ENCODE measurements at regions of chr6 and their contacts with region 1.

Region 1: GRCh38 chr6:76466286-76466685 is 393.8 kb upstream of the IMPG1 start:
- DNase-seq: no peak
- H3K4me3 ChIP-seq: no peak overlapping the region
- H3K27ac ChIP-seq: no peak overlapping the region
- H3K4me1 ChIP-seq: no peaks in the 10 kb centered on the region
- H3K27me3 ChIP-seq: no peaks in the 10 kb centered on the region
- CTCF ChIP-seq: no peak
- EP300 ChIP-seq: no peak
- POLR2A ChIP-seq: no peak

Region 2: GRCh38 chr6:75368151-75368779 is 1098.0 kb before region 1 on chr6:
- in situ Hi-C with region 1: no loop called
- intact Hi-C with region 1: no loop called
- DNase-seq: peak; percentile 15
- H3K4me3 ChIP-seq: no peak overlapping the region
- H3K27ac ChIP-seq: peak overlapping the region in 3 of 4 donors; percentile 48 to 54 (median 49)
- H3K4me1 ChIP-seq: peaks cover 0 to 14% (median 0%) of the 10 kb centered on the region in 4 donors
- H3K27me3 ChIP-seq: no peaks in the 10 kb centered on the region
- CTCF ChIP-seq: peak; percentile 26 to 47 (median 33)
- EP300 ChIP-seq: no peak
- POLR2A ChIP-seq: no peak

Region 3: GRCh38 chr6:76441875-76442274 is 24.4 kb before region 1 on chr6:
- in situ Hi-C with region 1: no loop called
- intact Hi-C with region 1: no loop called
- DNase-seq: no peak
- H3K4me3 ChIP-seq: no peak overlapping the region
- H3K27ac ChIP-seq: no peak overlapping the region
- H3K4me1 ChIP-seq: no peaks in the 10 kb centered on the region
- H3K27me3 ChIP-seq: no peaks in the 10 kb centered on the region
- CTCF ChIP-seq: no peak
- EP300 ChIP-seq: no peak
- POLR2A ChIP-seq: no peak

Region 4: GRCh38 chr6:76490456-76490855 is 24.2 kb after region 1 on chr6:
- in situ Hi-C with region 1: no loop called
- intact Hi-C with region 1: no loop called
- DNase-seq: no peak
- H3K4me3 ChIP-seq: no peak overlapping the region
- H3K27ac ChIP-seq: no peak overlapping the region
- H3K4me1 ChIP-seq: no peaks in the 10 kb centered on the region
- H3K27me3 ChIP-seq: no peaks in the 10 kb centered on the region
- CTCF ChIP-seq: no peak
- EP300 ChIP-seq: no peak
- POLR2A ChIP-seq: no peak

Region 5: DNA sequence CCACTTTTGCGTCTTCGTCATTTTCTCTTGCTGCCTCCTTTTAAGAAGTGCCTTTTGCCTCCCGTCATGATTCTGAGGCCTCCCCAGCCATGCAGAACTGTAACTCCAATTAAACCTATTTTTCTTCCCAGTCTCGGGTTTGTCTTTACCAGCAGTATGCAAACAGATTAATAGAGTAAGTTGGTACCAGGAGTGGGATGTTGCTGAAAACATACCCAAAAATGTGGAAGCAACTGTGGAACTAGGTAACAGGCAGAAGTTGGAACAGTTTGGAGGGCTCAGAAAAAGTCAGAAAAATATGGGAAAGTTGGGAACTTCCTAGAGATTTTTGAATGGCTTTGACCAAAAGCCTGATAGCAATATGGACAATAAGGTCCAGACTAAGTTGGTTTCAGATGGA is 1495.8 kb after region 1 on chr6:
- in situ Hi-C with region 1: no loop called
- intact Hi-C with region 1: loop called (anchors 10 kb)
- DNase-seq: no peak
- H3K4me3 ChIP-seq: no peak overlapping the region
- H3K27ac ChIP-seq: no peak overlapping the region
- H3K4me1 ChIP-seq: no peaks in the 10 kb centered on the region
- H3K27me3 ChIP-seq: no peaks in the 10 kb centered on the region
- CTCF ChIP-seq: no peak
- EP300 ChIP-seq: no peak
- POLR2A ChIP-seq: no peak

Measured in transverse colon (tissue), 4 donors.